ENCODE measurements at regions of chr7 and their contacts with region 1.

Region 1: GRCh38 chr7:148698397-148699023 is at the start of gene CUL1:
- DNase-seq: peak; percentile 88
- H3K4me3 Mint-ChIP-seq: peak within 1 kb of the TSS; percentile 89
- H3K27ac Mint-ChIP-seq: peak within 1 kb of the TSS; percentile 98
- H3K4me1 Mint-ChIP-seq: peaks cover 57% of the 10 kb centered on the region
- H3K27me3 Mint-ChIP-seq: no peaks in the 10 kb centered on the region
- total RNA-seq, gene CUL1: 64.7 to 69.6 TPM

Region 2: DNA sequence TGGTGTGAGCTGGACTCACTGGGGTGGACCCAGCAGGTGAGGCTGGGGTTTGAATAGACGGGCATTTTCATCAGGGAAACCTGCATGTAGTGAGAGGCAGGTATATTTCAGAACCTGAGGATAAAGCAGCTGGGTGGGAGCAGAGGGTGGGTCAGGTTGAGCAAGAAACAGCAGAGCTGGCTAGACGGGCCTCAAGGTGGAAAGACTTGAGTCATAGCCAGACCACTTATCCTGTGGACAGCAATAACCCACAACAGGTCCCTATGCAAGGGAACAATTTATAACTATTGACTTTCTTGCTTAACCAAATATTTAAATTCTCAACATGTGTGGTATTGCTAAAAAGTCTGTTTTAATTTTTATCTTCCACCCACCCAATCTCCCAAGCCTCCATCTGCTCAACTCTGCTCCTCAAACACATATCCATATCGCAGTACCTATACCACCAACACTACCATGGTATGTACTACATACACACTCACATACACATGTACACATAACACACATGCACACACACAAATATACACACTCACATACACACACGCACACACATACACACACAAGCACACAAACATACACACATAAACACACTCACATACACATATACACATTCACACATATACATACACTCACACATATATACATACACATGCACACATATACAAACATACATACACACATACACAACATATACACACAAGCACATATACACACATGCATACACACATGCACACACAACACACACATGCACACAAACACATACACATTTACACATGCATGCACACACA is 236.9 kb before region 1 on chr7:
- CTCF ChIA-PET with region 1: no interaction called
- POLR2A ChIA-PET with region 1: no interaction called
- intact Hi-C with region 1: no loop called
- DNase-seq: no peak
- H3K4me3 Mint-ChIP-seq: no peak overlapping the region
- H3K27ac Mint-ChIP-seq: no peak overlapping the region
- H3K4me1 Mint-ChIP-seq: no peaks in the 10 kb centered on the region
- H3K27me3 Mint-ChIP-seq: no peaks in the 10 kb centered on the region

Region 3: GRCh38 chr7:148628011-148628410 is 70.5 kb before region 1 on chr7:
- CTCF ChIA-PET with region 1: no interaction called
- POLR2A ChIA-PET with region 1: no interaction called
- intact Hi-C with region 1: loop called (anchors 2 kb)
- DNase-seq: no peak
- H3K4me3 Mint-ChIP-seq: no peak overlapping the region
- H3K27ac Mint-ChIP-seq: no peak overlapping the region
- H3K4me1 Mint-ChIP-seq: peaks cover 36% of the 10 kb centered on the region
- H3K27me3 Mint-ChIP-seq: peaks cover 8% of the 10 kb centered on the region

Region 4: GRCh38 chr7:148670807-148671206 is 27.7 kb before region 1 on chr7:
- CTCF ChIA-PET with region 1: no interaction called
- POLR2A ChIA-PET with region 1: no interaction called
- intact Hi-C with region 1: no loop called
- DNase-seq: no peak
- H3K4me3 Mint-ChIP-seq: no peak overlapping the region
- H3K27ac Mint-ChIP-seq: no peak overlapping the region
- H3K4me1 Mint-ChIP-seq: no peaks in the 10 kb centered on the region
- H3K27me3 Mint-ChIP-seq: no peaks in the 10 kb centered on the region

Region 5: GRCh38 chr7:148727501-148728278 is 29.2 kb after region 1 on chr7:
- CTCF ChIA-PET with region 1: interaction called, 3 read pairs
- POLR2A ChIA-PET with region 1: no interaction called
- intact Hi-C with region 1: loop called (anchors 1 kb)
- DNase-seq: peak; percentile 62
- H3K4me3 Mint-ChIP-seq: no peak overlapping the region
- H3K27ac Mint-ChIP-seq: peak overlapping the region; percentile 58
- H3K4me1 Mint-ChIP-seq: peaks cover 60% of the 10 kb centered on the region
- H3K27me3 Mint-ChIP-seq: no peaks in the 10 kb centered on the region

Region 6: GRCh38 chr7:148828965-148829364 is 130.5 kb after region 1 on chr7:
- CTCF ChIA-PET with region 1: no interaction called
- POLR2A ChIA-PET with region 1: no interaction called
- intact Hi-C with region 1: no loop called
- DNase-seq: no peak
- H3K4me3 Mint-ChIP-seq: no peak overlapping the region
- H3K27ac Mint-ChIP-seq: no peak overlapping the region
- H3K4me1 Mint-ChIP-seq: no peaks in the 10 kb centered on the region
- H3K27me3 Mint-ChIP-seq: no peaks in the 10 kb centered on the region

Region 7: DNA sequence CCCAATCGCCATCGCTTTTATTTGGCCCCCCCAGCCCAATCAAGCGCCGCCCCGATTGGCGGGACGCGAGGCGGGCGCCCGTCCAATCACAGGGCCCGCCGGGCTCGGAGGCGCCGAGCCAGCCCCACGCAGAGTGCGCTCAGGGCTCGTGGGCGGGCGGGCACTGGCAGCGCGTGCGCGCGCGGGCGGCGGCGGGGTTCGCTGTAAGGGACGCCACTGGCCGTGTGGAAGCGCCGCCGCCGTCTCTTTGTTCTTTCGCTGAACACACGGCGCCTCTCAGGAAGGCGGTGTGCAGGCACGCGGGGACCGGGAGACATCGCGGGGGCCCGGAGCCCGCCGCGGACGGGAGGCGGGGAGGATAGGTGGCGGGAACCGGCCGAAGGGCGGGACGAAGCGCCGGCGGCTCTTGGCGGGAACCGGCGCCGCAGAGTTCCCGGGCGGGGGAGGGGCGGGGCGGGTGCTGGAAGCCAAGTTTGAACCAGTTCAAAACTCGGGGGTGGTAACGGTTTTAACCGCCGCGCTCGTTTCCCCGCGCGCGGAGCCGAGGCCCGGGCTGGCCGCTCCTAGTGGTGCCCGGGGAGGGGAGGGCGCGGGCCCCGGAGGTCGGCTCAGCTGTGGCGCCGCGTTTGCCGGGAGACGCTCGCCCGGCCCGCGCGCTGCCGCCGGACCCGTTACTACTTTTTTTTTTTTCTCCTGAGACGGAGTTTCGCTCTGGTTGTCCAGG is 186.0 kb after region 1 on chr7:
- CTCF ChIA-PET with region 1: interaction called, 3 read pairs
- POLR2A ChIA-PET with region 1: interaction called, 5 read pairs
- intact Hi-C with region 1: loop called (anchors 2 kb)
- DNase-seq: peak; percentile 96
- H3K4me3 Mint-ChIP-seq: peak overlapping the region; percentile 92
- H3K27ac Mint-ChIP-seq: peak overlapping the region; percentile 98
- H3K4me1 Mint-ChIP-seq: peaks cover 31% of the 10 kb centered on the region
- H3K27me3 Mint-ChIP-seq: no peaks in the 10 kb centered on the region

Region 8: DNA sequence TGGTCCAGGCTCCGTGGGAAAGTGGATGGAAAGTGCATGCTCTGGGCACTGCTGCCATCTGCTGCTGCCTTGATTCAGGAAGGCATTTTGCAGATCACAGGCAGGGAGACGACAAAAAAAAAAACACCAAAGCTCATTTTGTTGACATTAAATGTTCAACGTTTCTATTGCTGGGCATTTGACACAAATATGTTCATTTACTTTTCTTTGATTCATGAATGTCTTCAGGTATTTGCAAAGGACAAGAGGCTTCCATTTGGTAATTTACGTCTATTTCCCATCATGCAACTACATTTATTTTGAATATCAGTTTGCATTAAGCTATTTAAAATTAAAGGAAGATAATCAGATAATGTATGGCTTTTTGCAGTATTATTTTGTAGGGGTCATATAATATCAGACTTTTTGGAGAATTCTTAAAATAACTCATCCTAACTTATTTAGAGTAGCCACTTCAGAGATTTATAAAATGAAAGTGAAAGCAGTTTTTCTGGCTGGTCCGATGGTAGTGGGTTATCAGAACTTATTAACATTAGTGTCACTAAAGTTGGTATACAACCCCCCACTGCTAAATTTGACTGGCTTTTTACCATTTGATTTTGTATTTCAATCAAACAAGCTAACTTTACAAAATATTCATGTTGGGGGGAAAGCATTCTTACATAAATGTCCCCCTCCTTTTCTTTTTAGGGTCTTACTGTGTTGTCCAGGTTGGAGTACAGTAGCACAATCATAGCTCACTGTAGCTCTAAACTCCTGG is 264.5 kb after region 1 on chr7:
- CTCF ChIA-PET with region 1: no interaction called
- POLR2A ChIA-PET with region 1: no interaction called
- intact Hi-C with region 1: loop called (anchors 5 kb)
- DNase-seq: peak; percentile 81
- H3K4me3 Mint-ChIP-seq: peak overlapping the region; percentile 92
- H3K27ac Mint-ChIP-seq: peak overlapping the region; percentile 87
- H3K4me1 Mint-ChIP-seq: peaks cover 23% of the 10 kb centered on the region
- H3K27me3 Mint-ChIP-seq: no peaks in the 10 kb centered on the region